Astrocyte of the cerebellum (primary cell): ENCODE measurements at regions of chr22 and their contacts with region 1.

Region 1: GRCh38 chr22:29269731-29270470 is 1.8 kb downstream of the EWSR1 start:
- DNase-seq: no peak
- H3K4me3 ChIP-seq: peak overlapping the region; percentile 89
- CTCF ChIP-seq: no peak

Region 2: DNA sequence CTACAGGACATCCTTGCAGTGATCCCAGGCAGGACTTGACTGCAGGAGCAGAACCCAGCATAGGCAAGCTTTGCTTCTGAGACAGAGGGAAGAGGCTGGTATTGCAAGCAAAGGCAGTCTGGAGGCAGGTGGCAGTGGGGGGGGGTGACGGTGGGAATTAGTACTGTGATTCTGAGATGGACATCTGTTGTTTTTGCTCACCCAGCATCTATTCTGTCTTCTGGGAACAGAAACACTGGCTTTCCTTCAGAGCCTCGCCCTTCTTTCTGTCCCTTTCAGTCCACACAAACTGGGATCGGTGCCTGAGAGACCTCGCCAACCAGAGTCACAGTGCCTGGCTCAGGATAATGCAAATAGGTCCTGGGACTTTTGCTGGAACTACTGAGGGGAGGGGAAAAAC is 76.8 kb after region 1 on chr22:
- in situ Hi-C with region 1: loop called (anchors 5 kb)
- DNase-seq: no peak
- H3K4me3 ChIP-seq: no peak overlapping the region
- CTCF ChIP-seq: no peak